AG04450 (cell line): ENCODE measurements at regions of chr2 and their contacts with region 1.

Region 1: DNA sequence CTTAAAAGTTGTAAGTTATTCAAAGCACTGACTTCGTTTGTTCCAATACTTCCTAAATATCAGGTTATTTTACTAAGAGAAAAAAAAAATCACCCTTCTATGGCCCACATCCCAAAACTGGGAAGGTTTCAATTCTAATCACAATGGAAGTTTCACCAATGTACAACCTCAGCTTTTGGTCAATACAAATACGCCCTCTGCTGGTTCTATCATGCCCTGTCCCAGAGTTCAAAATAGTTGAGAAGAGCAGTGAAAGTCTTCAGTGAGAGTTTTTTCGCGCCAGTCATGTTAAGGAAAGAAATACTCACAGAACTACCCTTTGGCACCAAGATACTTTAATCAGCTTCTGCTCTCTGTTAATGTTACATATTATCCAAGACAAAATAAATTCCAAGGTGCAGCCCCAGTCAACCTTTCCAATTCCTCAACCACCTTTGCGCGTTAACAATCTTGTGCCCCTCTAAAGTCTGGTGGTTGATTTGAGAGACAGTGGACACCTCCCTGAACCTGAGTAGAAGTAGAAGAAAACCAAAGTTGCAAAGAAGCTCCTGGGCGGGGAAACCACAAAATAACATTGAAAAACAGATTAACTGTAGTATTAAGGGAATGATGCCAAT is 59.9 kb downstream of the SUMO1 start:
- DNase-seq: peak; percentile 43
- H3K4me3 ChIP-seq: no peak overlapping the region
- H3K27ac ChIP-seq: no peak overlapping the region
- H3K27me3 ChIP-seq: no peaks in the 10 kb centered on the region
- CTCF ChIP-seq: peak; percentile 83

Region 2: GRCh38 chr2:201795607-201796477 is 382.6 kb before region 1 on chr2:
- CTCF ChIA-PET with region 1: interaction called, 16 read pairs
- POLR2A ChIA-PET with region 1: no interaction called
- DNase-seq: no peak
- H3K4me3 ChIP-seq: no peak overlapping the region
- H3K27ac ChIP-seq: no peak overlapping the region
- H3K27me3 ChIP-seq: no peaks in the 10 kb centered on the region
- CTCF ChIP-seq: peak; percentile 88

Region 3: GRCh38 chr2:202454536-202454935 is 276.1 kb after region 1 on chr2:
- CTCF ChIA-PET with region 1: no interaction called
- POLR2A ChIA-PET with region 1: no interaction called
- DNase-seq: no peak
- H3K4me3 ChIP-seq: no peak overlapping the region
- H3K27ac ChIP-seq: no peak overlapping the region
- H3K27me3 ChIP-seq: no peaks in the 10 kb centered on the region
- CTCF ChIP-seq: no peak